Activated T-helper 2 cell treated with anti-CD3 and anti-CD28 coated beads, Interferon-gamma antibody, Interleukin-2, Interleukin-4, amounts not matched to agents 10 μg/mL and 5 μg/mL and 100 μg/mL, durations not matched to agents 14 hours and 24 hours and 36 hours (primary cell): ENCODE measurements at regions of chr5 and their contacts with region 1.

Region 1: GRCh38 chr5:58993461-58993860 is 410.6 kb downstream of the RAB3C start:
- DNase-seq: no peak
- H3K4me3 Mint-ChIP-seq: no peak overlapping the region
- H3K27ac Mint-ChIP-seq: no peak overlapping the region
- H3K4me1 Mint-ChIP-seq: peaks cover 17% of the 10 kb centered on the region
- H3K27me3 Mint-ChIP-seq: no peaks in the 10 kb centered on the region

Region 2: DNA sequence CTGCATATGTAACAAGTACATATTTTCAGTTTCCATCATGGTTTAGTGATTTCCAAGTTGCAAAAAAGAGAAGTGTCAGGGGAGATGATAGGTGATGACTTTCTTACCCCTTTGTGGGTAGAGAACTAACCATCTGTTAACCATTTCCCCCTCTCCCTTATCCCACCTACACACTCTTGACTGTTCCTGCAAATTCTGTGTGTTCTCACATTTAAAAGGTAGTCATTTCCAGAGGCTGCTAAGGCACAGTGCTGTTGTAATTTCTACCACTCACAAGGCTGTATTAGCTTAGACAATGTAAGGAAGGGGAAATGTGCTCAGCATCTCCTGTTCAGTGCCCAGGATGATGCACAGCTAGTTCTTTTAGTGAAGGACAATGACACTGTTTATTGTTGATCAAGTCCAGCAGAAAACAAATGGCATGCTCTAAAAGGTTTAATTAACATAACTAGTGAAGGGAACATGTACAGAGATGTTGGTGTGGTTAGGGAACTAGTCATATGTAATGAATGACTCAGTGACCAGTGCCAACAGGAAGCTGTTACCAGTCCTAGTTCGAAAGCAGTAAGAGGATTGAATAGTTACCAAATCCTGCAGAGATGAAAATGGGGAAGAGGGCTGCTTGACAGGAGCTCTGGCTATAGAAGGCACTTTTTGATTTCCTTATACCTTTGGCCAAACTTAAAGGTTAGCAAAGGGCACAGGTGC is 698.7 kb before region 1 on chr5:
- intact Hi-C with region 1: no loop called
- DNase-seq: no peak
- H3K4me3 Mint-ChIP-seq: no peak overlapping the region
- H3K27ac Mint-ChIP-seq: no peak overlapping the region
- H3K4me1 Mint-ChIP-seq: peaks cover 4% of the 10 kb centered on the region
- H3K27me3 Mint-ChIP-seq: peaks cover 2% of the 10 kb centered on the region

Region 3: DNA sequence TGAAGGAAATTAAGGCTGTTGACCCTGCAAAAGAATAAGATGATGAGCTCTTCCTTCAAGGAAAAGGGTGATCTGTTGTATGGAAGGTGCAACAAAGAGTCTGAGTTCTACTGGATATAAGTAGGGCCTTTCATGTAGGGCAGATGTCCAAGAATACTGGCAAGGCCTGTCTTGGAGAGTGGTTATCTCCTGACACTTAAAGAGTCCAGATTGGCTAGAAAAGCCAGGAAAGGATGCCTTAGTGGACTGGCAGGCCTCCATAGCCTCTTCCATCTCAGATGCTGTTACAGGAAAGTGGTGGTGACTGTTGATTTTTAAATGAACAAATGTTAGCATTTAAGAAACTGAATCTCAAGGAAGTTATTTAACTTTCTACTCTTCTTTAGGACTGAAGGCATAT is 14.4 kb before region 1 on chr5:
- intact Hi-C with region 1: loop called (anchors 2 kb)
- DNase-seq: no peak
- H3K4me3 Mint-ChIP-seq: no peak overlapping the region
- H3K27ac Mint-ChIP-seq: no peak overlapping the region
- H3K4me1 Mint-ChIP-seq: peaks cover 11% of the 10 kb centered on the region
- H3K27me3 Mint-ChIP-seq: no peaks in the 10 kb centered on the region